Activated CD8-positive, alpha-beta T cell treated with anti-CD3 and anti-CD28 coated beads, Interleukin-2, amount 10 ng/mL, durations not matched to agents 7 days and 5 days (primary cell): ENCODE measurements at regions of chr11 and their contacts with region 1.

Region 1: GRCh38 chr11:65261591-65262380 is at the start of gene POLA2:
- DNase-seq: peak; percentile 97
- ATAC-seq: peak; percentile 96
- H3K4me3 Mint-ChIP-seq: peak within 1 kb of the TSS; percentile 97
- H3K27ac Mint-ChIP-seq: peak within 1 kb of the TSS; percentile 94
- H3K4me1 Mint-ChIP-seq: peaks cover 61% of the 10 kb centered on the region
- H3K27me3 Mint-ChIP-seq: no peaks in the 10 kb centered on the region
- total RNA-seq, gene POLA2: 63.6 to 76.1 TPM

Region 2: GRCh38 chr11:65134386-65135253 is 127.2 kb before region 1 on chr11 and contains the start of gene SYVN1:
- CTCF ChIA-PET with region 1: interaction called, 3 read pairs
- POLR2A ChIA-PET with region 1: interaction called, 15 read pairs
- DNase-seq: peak; percentile 93
- ATAC-seq: peak; percentile 89
- H3K4me3 Mint-ChIP-seq: peak within 1 kb of the TSS; percentile 99
- H3K27ac Mint-ChIP-seq: peak within 1 kb of the TSS; percentile 100
- H3K4me1 Mint-ChIP-seq: peaks cover 29% of the 10 kb centered on the region
- H3K27me3 Mint-ChIP-seq: no peaks in the 10 kb centered on the region
- total RNA-seq, gene SYVN1: 28.7 to 33.0 TPM

Region 3: DNA sequence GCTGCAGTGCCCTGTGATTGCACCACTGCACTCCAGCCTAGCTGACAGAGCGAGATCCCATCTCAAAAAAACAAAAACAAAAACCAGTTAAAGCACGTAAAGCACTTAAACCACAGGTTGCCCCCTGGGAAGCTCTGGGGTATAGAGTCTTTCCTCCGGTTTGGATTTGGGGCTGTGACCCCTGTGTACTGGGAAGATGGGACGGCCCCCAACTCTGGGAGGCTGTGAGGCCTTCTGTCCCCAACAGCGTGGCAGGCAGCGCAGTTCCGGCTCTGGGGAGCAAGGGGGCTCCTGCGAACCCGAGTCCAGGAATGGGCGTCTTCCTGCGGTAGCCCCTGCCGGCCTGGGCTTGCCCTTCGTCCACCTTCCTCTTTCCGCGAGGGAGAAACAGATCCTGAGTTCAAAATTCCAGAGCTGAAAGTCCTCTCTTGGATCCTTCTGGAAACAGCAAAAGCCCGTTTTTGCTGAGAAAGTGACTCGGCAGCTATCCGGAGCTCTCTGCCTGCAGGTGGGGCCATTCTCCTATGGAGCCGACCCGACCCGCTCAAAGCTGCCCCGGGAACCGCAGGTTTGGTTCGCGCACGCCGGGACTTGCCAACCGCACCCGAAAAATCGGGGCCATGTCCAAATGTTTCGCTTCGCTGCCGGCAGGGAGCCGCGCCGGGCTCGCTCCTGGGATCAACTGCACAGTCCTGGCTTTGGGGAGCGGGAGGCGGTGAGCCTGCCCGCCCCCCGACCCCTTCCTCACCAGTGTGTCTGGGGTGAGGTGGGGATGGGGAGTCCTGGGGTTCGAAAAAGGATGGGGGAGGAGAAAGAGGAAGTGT is 36.3 kb before region 1 on chr11:
- CTCF ChIA-PET with region 1: interaction called, 16 read pairs
- POLR2A ChIA-PET with region 1: interaction called, 4 read pairs
- DNase-seq: peak; percentile 67
- ATAC-seq: peak; percentile 86
- H3K4me3 Mint-ChIP-seq: peak overlapping the region; percentile 72
- H3K27ac Mint-ChIP-seq: no peak overlapping the region
- H3K4me1 Mint-ChIP-seq: peaks cover 27% of the 10 kb centered on the region
- H3K27me3 Mint-ChIP-seq: peaks cover 18% of the 10 kb centered on the region

Region 4: GRCh38 chr11:65274735-65275682 is 13.2 kb after region 1 on chr11:
- CTCF ChIA-PET with region 1: interaction called, 13 read pairs
- POLR2A ChIA-PET with region 1: interaction called, 17 read pairs
- DNase-seq: peak; percentile 42
- ATAC-seq: no peak
- H3K4me3 Mint-ChIP-seq: no peak overlapping the region
- H3K27ac Mint-ChIP-seq: no peak overlapping the region
- H3K4me1 Mint-ChIP-seq: peaks cover 12% of the 10 kb centered on the region
- H3K27me3 Mint-ChIP-seq: no peaks in the 10 kb centered on the region